ENCODE measurements at regions of chr20 and their contacts with region 1.

Region 1: GRCh38 chr20:32366380-32366779 is 8.2 kb downstream of the ASXL1 start:
- DNase-seq: no peak
- ATAC-seq: no peak
- H3K4me3 ChIP-seq: no peak overlapping the region
- H3K4me3 Mint-ChIP-seq: peak overlapping the region in 1 of 3 donors; percentile 25
- H3K27ac ChIP-seq: no peak overlapping the region
- H3K27ac Mint-ChIP-seq: peak overlapping the region; percentile 66 to 71
- H3K4me1 ChIP-seq: peaks cover 41 to 49% of the 10 kb centered on the region in 2 experiments
- H3K4me1 Mint-ChIP-seq: peaks cover 71 to 77% (median 74%) of the 10 kb centered on the region in 3 donors
- H3K27me3 ChIP-seq: no peaks in the 10 kb centered on the region
- H3K27me3 Mint-ChIP-seq: no peaks in the 10 kb centered on the region

Region 2: GRCh38 chr20:32034581-32035425 is 331.6 kb before region 1 on chr20:
- CTCF ChIA-PET with region 1: no interaction called
- POLR2A ChIA-PET with region 1: no interaction called
- DNase-seq: no peak
- ATAC-seq: no peak
- H3K4me3 ChIP-seq: no peak overlapping the region
- H3K4me3 Mint-ChIP-seq: no peak overlapping the region
- H3K27ac ChIP-seq: no peak overlapping the region
- H3K27ac Mint-ChIP-seq: no peak overlapping the region
- H3K4me1 ChIP-seq: peaks cover 0 to 8% of the 10 kb centered on the region in 2 experiments
- H3K4me1 Mint-ChIP-seq: peaks cover 0 to 2% (median under 1%) of the 10 kb centered on the region in 3 donors
- H3K27me3 ChIP-seq: peaks cover 0 to 53% of the 10 kb centered on the region in 2 experiments
- H3K27me3 Mint-ChIP-seq: peaks cover 22 to 48% of the 10 kb centered on the region in 2 donors

Region 3: GRCh38 chr20:32411955-32412706 is 45.8 kb after region 1 on chr20:
- CTCF ChIA-PET with region 1: no interaction called
- POLR2A ChIA-PET with region 1: interaction called in 1 of 2 experiments, 10 read pairs
- DNase-seq: no peak
- ATAC-seq: no peak
- H3K4me3 ChIP-seq: peak overlapping the region in 1 of 2 donors; percentile 6
- H3K4me3 Mint-ChIP-seq: peak overlapping the region in 2 of 3 donors; percentile 7 to 19
- H3K27ac ChIP-seq: no peak overlapping the region
- H3K27ac Mint-ChIP-seq: peak overlapping the region; percentile 1 to 45
- H3K4me1 ChIP-seq: peaks cover 32 to 59% of the 10 kb centered on the region in 2 experiments
- H3K4me1 Mint-ChIP-seq: peaks cover 73 to 78% (median 75%) of the 10 kb centered on the region in 3 donors
- H3K27me3 ChIP-seq: no peaks in the 10 kb centered on the region
- H3K27me3 Mint-ChIP-seq: no peaks in the 10 kb centered on the region